Mammary epithelial cell (primary cell): ENCODE measurements at regions of chr3 and their contacts with region 1.

Region 1: DNA sequence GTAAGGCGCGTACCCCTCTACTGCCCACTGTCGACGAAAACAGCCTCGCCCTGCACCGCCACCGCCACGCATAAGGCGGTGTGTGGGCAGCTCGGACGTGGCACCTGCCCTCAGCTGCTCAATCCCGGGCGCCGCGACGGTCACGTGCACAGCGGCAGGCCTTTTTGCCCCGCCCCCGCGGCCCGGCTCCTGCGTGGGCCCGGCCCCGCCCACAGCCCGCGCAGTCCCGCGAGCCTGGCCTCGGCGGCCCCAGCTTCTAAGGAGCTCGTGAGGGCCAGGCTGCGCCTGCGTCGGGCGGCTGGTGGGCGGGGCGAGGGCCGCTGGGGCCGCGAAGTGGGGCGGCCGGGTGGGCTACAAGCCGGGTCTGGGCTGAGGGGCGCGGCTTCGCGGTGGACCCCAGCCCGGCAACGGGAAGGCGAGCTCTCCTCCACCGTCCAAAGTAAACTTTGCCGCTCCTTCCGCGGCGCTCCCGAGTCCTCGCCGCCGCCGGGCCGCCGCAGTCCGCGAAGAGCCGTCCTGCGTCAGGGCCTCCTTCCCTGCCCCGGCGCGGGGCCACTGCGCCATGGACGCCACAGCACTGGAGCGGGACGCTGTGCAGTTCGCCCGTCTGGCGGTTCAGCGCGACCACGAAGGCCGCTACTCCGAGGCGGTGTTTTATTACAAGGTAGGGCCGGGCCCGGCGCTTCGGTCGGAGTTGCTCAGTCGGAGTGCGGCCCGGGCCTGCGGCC is at the start of gene CAPN7:
- DNase-seq: peak; percentile 89
- H3K4me3 ChIP-seq: peak within 1 kb of the TSS; percentile 93 to 96 (median 95)
- H3K27ac ChIP-seq: peak within 1 kb of the TSS; percentile 70
- H3K4me1 ChIP-seq: peaks cover 8% of the 10 kb centered on the region
- H3K27me3 ChIP-seq: no peaks in the 10 kb centered on the region
- CTCF ChIP-seq: peak; percentile 21 to 43
- total RNA-seq, gene CAPN7: 32.8 to 46.0 TPM

Region 2: GRCh38 chr3:14947886-14948555 is 258.1 kb before region 1 on chr3:
- CTCF ChIA-PET with region 1: no interaction called
- dilution Hi-C with region 1: no loop called
- in situ Hi-C with region 1: loop called in 1 of 2 experiments (anchors 25 kb)
- intact Hi-C with region 1: no loop called
- DNase-seq: peak; percentile 92
- H3K4me3 ChIP-seq: peak overlapping the region; percentile 84 to 98 (median 93)
- H3K27ac ChIP-seq: peak overlapping the region; percentile 92
- H3K4me1 ChIP-seq: peaks cover 14% of the 10 kb centered on the region
- H3K27me3 ChIP-seq: no peaks in the 10 kb centered on the region
- CTCF ChIP-seq: no peak

Region 3: GRCh38 chr3:15032650-15033049 is 173.4 kb before region 1 on chr3:
- CTCF ChIA-PET with region 1: no interaction called
- dilution Hi-C with region 1: no loop called
- in situ Hi-C with region 1: no loop called
- intact Hi-C with region 1: no loop called
- DNase-seq: no peak
- H3K4me3 ChIP-seq: no peak overlapping the region
- H3K27ac ChIP-seq: no peak overlapping the region
- H3K4me1 ChIP-seq: no peaks in the 10 kb centered on the region
- H3K27me3 ChIP-seq: no peaks in the 10 kb centered on the region
- CTCF ChIP-seq: no peak

Region 4: GRCh38 chr3:15051531-15051930 is 154.6 kb before region 1 on chr3:
- CTCF ChIA-PET with region 1: no interaction called
- dilution Hi-C with region 1: no loop called
- in situ Hi-C with region 1: no loop called
- intact Hi-C with region 1: no loop called
- DNase-seq: peak; percentile 34
- H3K4me3 ChIP-seq: no peak overlapping the region
- H3K27ac ChIP-seq: no peak overlapping the region
- H3K4me1 ChIP-seq: no peaks in the 10 kb centered on the region
- H3K27me3 ChIP-seq: no peaks in the 10 kb centered on the region
- CTCF ChIP-seq: peak; percentile 72 to 81

Region 5: DNA sequence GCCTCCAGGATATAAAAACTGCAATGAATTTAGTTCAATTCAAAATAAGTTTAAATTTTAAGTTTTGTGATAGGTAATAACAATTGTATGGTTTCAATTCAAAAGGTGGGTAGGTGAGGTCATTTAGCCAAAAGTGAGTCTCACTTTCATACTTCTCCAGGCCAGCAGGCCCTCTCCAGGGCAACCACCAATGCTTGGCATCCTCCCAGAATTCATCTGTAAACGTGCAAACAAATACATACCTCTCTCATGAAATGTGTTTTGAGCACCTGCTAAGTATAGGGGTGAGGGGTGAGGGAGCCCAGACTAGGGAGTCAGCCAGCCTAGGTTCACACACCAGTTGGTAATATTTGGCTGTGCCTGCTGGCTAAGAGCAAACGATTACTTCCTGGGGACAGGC is 85.1 kb before region 1 on chr3:
- CTCF ChIA-PET with region 1: no interaction called
- dilution Hi-C with region 1: loop called (anchors 5 kb)
- in situ Hi-C with region 1: loop called in 1 of 2 experiments (anchors 10 kb)
- intact Hi-C with region 1: loop called (anchors 2 kb)
- DNase-seq: no peak
- H3K4me3 ChIP-seq: no peak overlapping the region
- H3K27ac ChIP-seq: no peak overlapping the region
- H3K4me1 ChIP-seq: no peaks in the 10 kb centered on the region
- H3K27me3 ChIP-seq: no peaks in the 10 kb centered on the region
- CTCF ChIP-seq: no peak

Region 6: GRCh38 chr3:15159501-15160136 is 46.5 kb before region 1 on chr3:
- CTCF ChIA-PET with region 1: no interaction called
- dilution Hi-C with region 1: no loop called
- in situ Hi-C with region 1: no loop called
- intact Hi-C with region 1: no loop called
- DNase-seq: no peak
- H3K4me3 ChIP-seq: no peak overlapping the region
- H3K27ac ChIP-seq: no peak overlapping the region
- H3K4me1 ChIP-seq: no peaks in the 10 kb centered on the region
- H3K27me3 ChIP-seq: peaks cover 5% of the 10 kb centered on the region
- CTCF ChIP-seq: no peak

Region 7: DNA sequence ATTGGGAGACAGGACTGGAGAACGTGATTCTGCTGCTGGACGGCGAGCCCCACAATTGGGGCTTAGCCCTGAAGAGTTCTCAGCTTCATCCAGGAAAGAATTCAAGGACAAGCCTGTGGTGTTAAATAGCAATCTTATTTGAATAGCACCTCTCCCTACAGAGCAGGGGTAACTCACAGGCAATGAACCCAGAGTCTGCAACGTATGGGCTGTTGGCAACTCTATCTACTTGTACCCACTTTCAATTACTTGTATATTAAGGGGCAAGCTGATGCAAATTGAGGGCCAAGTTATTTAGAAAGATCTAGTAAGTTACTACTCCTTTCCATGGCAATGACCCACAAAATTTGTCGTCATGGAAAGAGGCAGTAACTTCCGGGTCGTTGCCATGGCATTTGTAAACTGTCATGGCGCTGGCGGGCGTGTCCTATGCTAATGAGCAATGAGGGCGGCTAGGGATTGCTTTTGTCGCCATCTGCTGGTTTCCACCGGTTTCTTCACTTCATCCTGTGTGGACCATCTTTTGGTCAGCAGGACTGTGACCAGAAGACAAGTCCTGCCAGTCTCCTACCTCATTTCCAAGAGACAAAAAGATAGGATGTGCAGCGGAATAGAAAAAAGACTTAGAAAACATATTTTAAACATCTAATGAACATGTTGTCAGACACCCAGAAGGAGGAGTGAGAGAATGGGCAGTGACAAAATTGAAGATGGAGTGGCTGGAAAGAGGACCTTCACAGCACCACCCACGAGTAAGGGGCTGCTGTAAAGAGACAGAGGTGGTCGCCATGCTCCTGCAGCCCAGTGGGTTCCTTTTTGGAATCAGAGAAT is 172.1 kb after region 1 on chr3:
- CTCF ChIA-PET with region 1: no interaction called
- dilution Hi-C with region 1: no loop called
- in situ Hi-C with region 1: no loop called
- intact Hi-C with region 1: loop called (anchors 1 kb)
- DNase-seq: peak; percentile 85
- H3K4me3 ChIP-seq: no peak overlapping the region
- H3K27ac ChIP-seq: peak overlapping the region; percentile 85
- H3K4me1 ChIP-seq: no peaks in the 10 kb centered on the region
- H3K27me3 ChIP-seq: no peaks in the 10 kb centered on the region
- CTCF ChIP-seq: peak; percentile 91 to 92

Region 8: GRCh38 chr3:15471861-15472260 is 265.8 kb after region 1 on chr3:
- CTCF ChIA-PET with region 1: interaction called, 21 read pairs
- dilution Hi-C with region 1: no loop called
- in situ Hi-C with region 1: no loop called
- intact Hi-C with region 1: no loop called
- DNase-seq: no peak
- H3K4me3 ChIP-seq: no peak overlapping the region
- H3K27ac ChIP-seq: no peak overlapping the region
- H3K4me1 ChIP-seq: no peaks in the 10 kb centered on the region
- H3K27me3 ChIP-seq: peaks cover 2% of the 10 kb centered on the region
- CTCF ChIP-seq: no peak

Region 9: DNA sequence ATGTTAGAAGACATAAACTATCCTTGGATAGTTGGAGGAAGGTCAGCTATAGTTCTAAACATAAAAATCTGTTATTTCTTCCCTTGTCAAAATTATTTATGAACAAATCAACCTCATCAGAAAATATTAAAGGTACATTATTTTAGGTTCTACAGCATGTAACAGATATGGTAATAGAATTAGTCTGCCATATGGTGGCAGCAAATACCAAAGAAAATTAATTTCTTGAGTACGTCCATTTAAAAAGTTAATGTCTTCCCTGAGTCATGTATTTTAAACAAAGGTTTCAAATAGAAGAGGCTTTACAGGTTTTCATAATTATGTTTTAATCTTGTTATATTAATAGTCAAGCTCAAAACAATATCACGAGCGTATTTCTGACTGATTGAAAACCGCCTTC is 609.6 kb after region 1 on chr3:
- CTCF ChIA-PET with region 1: no interaction called
- dilution Hi-C with region 1: no loop called
- in situ Hi-C with region 1: no loop called
- intact Hi-C with region 1: loop called (anchors 5 kb)
- DNase-seq: peak; percentile 41
- H3K4me3 ChIP-seq: no peak overlapping the region
- H3K27ac ChIP-seq: no peak overlapping the region
- H3K4me1 ChIP-seq: peaks cover 9% of the 10 kb centered on the region
- H3K27me3 ChIP-seq: no peaks in the 10 kb centered on the region
- CTCF ChIP-seq: peak in 1 of 2 donors; percentile 31